Prostate gland (tissue), 2 donors: ENCODE measurements at regions of chr2 and their contacts with region 1.

Region 1: GRCh38 chr2:239143858-239144718 is 256.7 kb downstream of the HDAC4 start:
- DNase-seq: no peak
- H3K4me3 ChIP-seq: no peak overlapping the region
- H3K27ac ChIP-seq: no peak overlapping the region
- H3K4me1 ChIP-seq: no peaks in the 10 kb centered on the region
- H3K27me3 ChIP-seq: no peaks in the 10 kb centered on the region
- CTCF ChIP-seq: peak in 3 of 4 experiments; percentile 57 to 68 (median 59)
- POLR2A ChIP-seq: no peak

Region 2: GRCh38 chr2:239193925-239194677 is 50.0 kb after region 1 on chr2:
- intact Hi-C with region 1: no loop called
- DNase-seq: no peak
- H3K4me3 ChIP-seq: no peak overlapping the region
- H3K27ac ChIP-seq: no peak overlapping the region
- H3K4me1 ChIP-seq: no peaks in the 10 kb centered on the region
- H3K27me3 ChIP-seq: no peaks in the 10 kb centered on the region
- CTCF ChIP-seq: no peak
- POLR2A ChIP-seq: no peak

Region 3: GRCh38 chr2:239249776-239250175 is 105.7 kb after region 1 on chr2:
- intact Hi-C with region 1: loop called (anchors 10 kb)
- DNase-seq: no peak
- H3K4me3 ChIP-seq: no peak overlapping the region
- H3K27ac ChIP-seq: no peak overlapping the region
- H3K4me1 ChIP-seq: no peaks in the 10 kb centered on the region
- H3K27me3 ChIP-seq: no peaks in the 10 kb centered on the region
- CTCF ChIP-seq: no peak
- POLR2A ChIP-seq: no peak